WTC11 (cell line): ENCODE measurements at regions of chr2 and their contacts with region 1.

Region 1: GRCh38 chr2:7014174-7014640 is 97.0 kb downstream of the RNF144A start:
- DNase-seq: peak; percentile 32
- ATAC-seq: peak; percentile 75
- H3K4me3 Mint-ChIP-seq: no peak overlapping the region
- H3K27ac Mint-ChIP-seq: no peak overlapping the region
- H3K4me1 Mint-ChIP-seq: peaks cover 11% of the 10 kb centered on the region
- H3K27me3 Mint-ChIP-seq: no peaks in the 10 kb centered on the region
- CTCF ChIP-seq: 0 out of 2 replicates have a peak, but pooled peaks have one; percentile 21

Region 2: DNA sequence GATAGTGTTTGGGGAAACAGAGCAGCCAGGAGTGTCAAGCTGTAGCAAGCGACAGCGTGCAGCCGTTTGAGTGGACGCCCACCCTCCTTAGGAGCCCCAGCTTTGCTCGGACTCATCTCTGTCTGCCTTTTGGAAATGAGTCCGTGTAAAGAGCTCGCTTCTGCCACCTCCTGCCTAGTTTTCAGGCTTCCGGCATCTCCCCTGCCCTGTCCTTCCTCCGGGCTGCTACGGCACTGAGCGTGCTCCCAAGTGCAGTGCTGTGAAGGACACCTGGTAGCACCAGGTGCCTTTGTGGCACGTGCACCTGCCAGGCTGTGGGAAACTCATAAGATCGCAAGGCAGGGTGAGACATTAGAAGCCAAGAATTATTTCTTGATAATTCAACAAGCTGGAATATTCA is 20.1 kb after region 1 on chr2:
- CTCF ChIA-PET with region 1: interaction called, 15 read pairs
- POLR2A ChIA-PET with region 1: no interaction called
- DNase-seq: peak; percentile 41
- ATAC-seq: peak; percentile 75
- H3K4me3 Mint-ChIP-seq: no peak overlapping the region
- H3K27ac Mint-ChIP-seq: no peak overlapping the region
- H3K4me1 Mint-ChIP-seq: no peaks in the 10 kb centered on the region
- H3K27me3 Mint-ChIP-seq: no peaks in the 10 kb centered on the region
- CTCF ChIP-seq: no peak

Region 3: GRCh38 chr2:7097348-7097895 is 83.2 kb after region 1 on chr2:
- CTCF ChIA-PET with region 1: no interaction called
- POLR2A ChIA-PET with region 1: no interaction called
- DNase-seq: peak; percentile 83
- ATAC-seq: peak; percentile 98
- H3K4me3 Mint-ChIP-seq: peak overlapping the region; percentile 12; the same call in 1 of the 2 replicates
- H3K27ac Mint-ChIP-seq: no peak overlapping the region
- H3K4me1 Mint-ChIP-seq: peaks cover 7% of the 10 kb centered on the region
- H3K27me3 Mint-ChIP-seq: peaks cover 8% of the 10 kb centered on the region
- CTCF ChIP-seq: peak; percentile 95

Region 4: DNA sequence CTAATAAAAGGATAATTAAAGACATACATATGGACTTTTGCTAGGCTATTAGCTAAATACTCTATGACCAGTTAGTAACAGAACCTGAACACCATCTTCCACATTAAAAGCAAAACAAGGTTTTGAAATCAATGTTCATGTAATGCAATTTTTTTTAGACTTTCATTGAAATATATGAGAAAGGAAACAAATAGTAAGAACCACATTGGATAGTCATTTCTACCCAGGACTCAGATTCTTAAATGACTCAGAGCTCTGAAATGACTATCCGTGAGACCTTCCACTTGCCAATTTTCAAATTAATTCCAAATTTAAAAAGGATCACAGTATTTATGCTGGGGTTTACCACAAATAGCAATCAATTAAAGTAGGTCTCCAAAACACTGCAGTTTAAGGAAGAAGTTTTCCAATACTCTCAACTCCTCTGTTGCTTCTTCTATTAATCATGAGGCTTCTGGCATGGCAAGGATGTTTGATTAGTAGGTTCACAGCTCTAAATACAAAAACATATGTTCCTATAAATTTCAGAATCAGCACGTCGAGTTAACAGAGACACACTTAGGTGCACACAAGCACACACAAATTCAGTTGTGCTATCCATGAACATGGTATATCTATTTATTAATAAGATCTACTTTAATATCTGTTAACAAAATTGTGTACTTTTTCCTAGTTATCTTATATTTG is 744.0 kb after region 1 on chr2:
- CTCF ChIA-PET with region 1: no interaction called
- POLR2A ChIA-PET with region 1: no interaction called
- DNase-seq: no peak
- ATAC-seq: no peak
- H3K4me3 Mint-ChIP-seq: no peak overlapping the region
- H3K27ac Mint-ChIP-seq: no peak overlapping the region
- H3K4me1 Mint-ChIP-seq: no peaks in the 10 kb centered on the region
- H3K27me3 Mint-ChIP-seq: peaks cover 7% of the 10 kb centered on the region
- CTCF ChIP-seq: no peak